ENCODE measurements at regions of chr19 and their contacts with region 1.

Region 1: DNA sequence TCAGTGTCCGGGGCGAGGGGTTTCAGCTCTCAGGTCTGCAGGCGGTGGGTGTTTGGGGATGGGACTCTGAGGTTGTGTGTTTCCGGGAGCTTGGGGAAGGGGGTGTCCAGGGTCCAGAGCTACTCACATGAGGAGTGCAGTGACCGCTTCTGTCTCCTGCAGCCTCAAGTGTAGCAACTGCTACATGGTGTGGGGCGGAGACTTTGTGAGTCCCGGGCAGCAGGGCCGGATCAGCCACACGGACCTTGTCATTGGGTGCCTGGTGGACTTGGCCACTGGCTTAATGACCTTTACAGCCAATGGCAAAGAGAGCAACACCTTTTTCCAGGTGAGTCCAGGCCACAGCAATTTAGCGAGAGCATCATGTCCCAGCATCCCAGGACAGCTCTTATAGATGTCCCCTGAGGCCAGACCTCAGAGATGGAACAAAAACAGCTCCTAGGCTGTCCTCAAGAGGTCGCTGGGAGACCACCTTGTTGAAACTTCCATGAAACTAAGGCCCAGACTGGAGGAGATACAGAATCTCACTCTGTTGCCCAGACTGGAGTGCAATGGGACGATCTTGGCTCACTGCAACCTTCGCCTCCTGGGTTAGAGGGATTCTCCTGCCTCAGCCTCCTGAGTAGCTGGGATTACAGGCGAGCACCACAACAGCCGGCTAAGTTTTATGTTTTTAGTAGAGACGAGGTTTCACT is 44.9 kb downstream of the RYR1 start:
- DNase-seq: peak in 1 of 9 experiments; percentile 21
- ATAC-seq: no peak
- H3K4me3 ChIP-seq: no peak overlapping the region
- H3K4me3 Mint-ChIP-seq: no peak overlapping the region
- H3K27ac ChIP-seq: no peak overlapping the region
- H3K27ac Mint-ChIP-seq: no peak overlapping the region
- H3K4me1 ChIP-seq: no peaks in the 10 kb centered on the region
- H3K4me1 Mint-ChIP-seq: no peaks in the 10 kb centered on the region
- H3K27me3 ChIP-seq: no peaks in the 10 kb centered on the region
- H3K27me3 Mint-ChIP-seq: peaks cover 10% of the 10 kb centered on the region
- CTCF ChIP-seq: no peak

Region 2: GRCh38 chr19:38433268-38433733 is 45.1 kb before region 1 on chr19 and contains the start of gene RYR1:
- CTCF ChIA-PET with region 1: no interaction called
- POLR2A ChIA-PET with region 1: no interaction called
- intact Hi-C with region 1: no loop called
- DNase-seq: peak in 7 of 9 experiments; percentile 11 to 45 (median 37)
- ATAC-seq: peak; percentile 66
- H3K4me3 ChIP-seq: no peak within 1 kb of the TSS
- H3K4me3 Mint-ChIP-seq: peak within 1 kb of the TSS; percentile 31
- H3K27ac ChIP-seq: no peak within 1 kb of the TSS
- H3K27ac Mint-ChIP-seq: no peak within 1 kb of the TSS
- H3K4me1 ChIP-seq: peaks cover 3% of the 10 kb centered on the region
- H3K4me1 Mint-ChIP-seq: peaks cover 6% of the 10 kb centered on the region
- H3K27me3 ChIP-seq: peaks cover 5 to 9% of the 10 kb centered on the region in 2 experiments
- H3K27me3 Mint-ChIP-seq: peaks cover 31% of the 10 kb centered on the region
- CTCF ChIP-seq: no peak
- total RNA-seq, gene RYR1: 0.53 to 1.8 TPM

Region 3: DNA sequence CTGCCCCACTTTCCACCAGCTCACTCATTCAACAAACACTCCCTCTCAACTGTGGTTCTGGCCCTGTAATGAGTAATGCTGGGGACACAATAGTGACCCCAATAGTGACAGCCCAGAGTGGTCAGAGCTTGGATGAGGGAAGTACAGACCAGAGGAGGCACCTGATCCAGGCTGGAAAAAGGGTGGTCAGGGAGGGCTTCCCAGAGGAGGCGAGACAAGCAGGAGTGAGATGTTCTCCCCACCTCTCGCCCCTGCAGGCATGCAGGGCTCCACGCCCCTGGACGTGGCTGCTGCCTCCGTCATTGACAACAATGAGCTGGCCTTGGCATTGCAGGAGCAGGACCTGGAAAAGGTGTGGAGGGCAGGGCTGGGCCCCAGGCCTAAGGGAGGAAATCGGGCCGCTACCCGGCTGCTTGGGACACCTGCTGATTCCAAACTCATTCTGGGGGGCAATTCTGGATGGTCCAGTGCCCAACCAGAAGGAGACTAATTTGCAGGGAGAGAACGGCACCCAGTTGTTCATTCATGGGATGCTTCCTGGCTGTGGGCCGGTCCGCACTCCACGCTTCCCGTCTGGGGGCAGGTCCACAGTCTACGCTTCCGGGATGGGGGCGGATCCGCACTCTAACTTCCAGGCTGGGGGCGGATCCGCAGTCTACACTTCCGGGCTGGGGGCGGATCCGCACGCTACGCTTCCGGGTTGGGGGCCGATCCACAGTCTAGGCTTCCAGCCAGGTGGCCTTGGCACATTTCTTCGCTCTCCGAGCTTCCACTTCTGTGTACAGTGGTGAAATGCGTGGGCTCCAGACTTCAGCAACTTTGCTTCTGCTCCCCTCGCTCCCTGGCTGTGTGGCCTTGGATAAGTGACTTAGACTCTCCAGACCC is 18.4 kb after region 1 on chr19:
- CTCF ChIA-PET with region 1: no interaction called
- POLR2A ChIA-PET with region 1: no interaction called
- intact Hi-C with region 1: loop called in 1 of 2 experiments (anchors 1 kb)
- DNase-seq: no peak
- ATAC-seq: no peak
- H3K4me3 ChIP-seq: no peak overlapping the region
- H3K4me3 Mint-ChIP-seq: no peak overlapping the region
- H3K27ac ChIP-seq: no peak overlapping the region
- H3K27ac Mint-ChIP-seq: no peak overlapping the region
- H3K4me1 ChIP-seq: no peaks in the 10 kb centered on the region
- H3K4me1 Mint-ChIP-seq: no peaks in the 10 kb centered on the region
- H3K27me3 ChIP-seq: no peaks in the 10 kb centered on the region
- H3K27me3 Mint-ChIP-seq: peaks cover 11% of the 10 kb centered on the region
- CTCF ChIP-seq: no peak

Region 4: GRCh38 chr19:38506723-38507550 is 28.5 kb after region 1 on chr19:
- CTCF ChIA-PET with region 1: no interaction called
- POLR2A ChIA-PET with region 1: no interaction called
- intact Hi-C with region 1: no loop called
- DNase-seq: peak in 8 of 9 experiments; percentile 17 to 91 (median 76)
- ATAC-seq: peak; percentile 89
- H3K4me3 ChIP-seq: peak overlapping the region in 1 of 2 experiments; percentile 3
- H3K4me3 Mint-ChIP-seq: no peak overlapping the region
- H3K27ac ChIP-seq: no peak overlapping the region
- H3K27ac Mint-ChIP-seq: no peak overlapping the region
- H3K4me1 ChIP-seq: peaks cover 7% of the 10 kb centered on the region
- H3K4me1 Mint-ChIP-seq: peaks cover 4% of the 10 kb centered on the region
- H3K27me3 ChIP-seq: peaks cover 0 to 4% of the 10 kb centered on the region in 2 experiments
- H3K27me3 Mint-ChIP-seq: peaks cover 12% of the 10 kb centered on the region
- CTCF ChIP-seq: no peak

Measured in CD8-positive, alpha-beta T cell (primary cell).